ENCODE measurements at regions of chr17 and their contacts with region 1.

Region 1: GRCh38 chr17:42508426-42509165 is 27.4 kb upstream of the NAGLU start:
- DNase-seq: no peak
- ATAC-seq: peak in 1 of 4 donors; percentile 35
- H3K4me3 ChIP-seq: no peak overlapping the region
- H3K27ac ChIP-seq: no peak overlapping the region
- H3K4me1 ChIP-seq: peaks cover 0 to 19% (median 7%) of the 10 kb centered on the region in 12 donors
- H3K27me3 ChIP-seq: no peaks in the 10 kb centered on the region
- CTCF ChIP-seq: no peak
- POLR2A ChIP-seq: no peak

Region 2: DNA sequence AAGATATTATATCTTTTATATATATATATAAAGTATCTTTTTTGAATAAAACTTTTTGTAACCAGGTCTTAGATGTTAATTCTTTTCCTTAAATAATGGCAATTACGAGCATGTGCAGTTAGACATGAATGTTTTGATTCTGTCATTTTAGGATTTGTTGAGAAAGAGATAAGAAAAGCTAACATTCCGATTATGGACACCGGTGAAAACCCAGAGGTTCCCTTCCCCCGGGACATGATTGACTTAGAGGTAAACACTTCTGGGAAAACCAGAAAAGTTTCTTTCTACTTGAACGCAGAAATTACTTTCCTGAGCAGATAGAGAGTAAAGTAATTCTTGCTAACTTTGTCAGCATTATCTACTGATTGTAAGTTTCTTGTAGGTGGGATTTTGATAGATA is 40.7 kb before region 1 on chr17:
- intact Hi-C with region 1: loop called in 3 of 10 experiments (anchors 5 to 10 kb)
- DNase-seq: no peak
- ATAC-seq: no peak
- H3K4me3 ChIP-seq: no peak overlapping the region
- H3K27ac ChIP-seq: no peak overlapping the region
- H3K4me1 ChIP-seq: peaks cover 0 to 17% (median 0%) of the 10 kb centered on the region in 12 donors
- H3K27me3 ChIP-seq: no peaks in the 10 kb centered on the region
- CTCF ChIP-seq: no peak
- POLR2A ChIP-seq: no peak

Region 3: GRCh38 chr17:42494673-42495072 is 13.9 kb before region 1 on chr17:
- intact Hi-C with region 1: loop called in 1 of 10 experiments (anchors 2 kb)
- DNase-seq: no peak
- ATAC-seq: no peak
- H3K4me3 ChIP-seq: no peak overlapping the region
- H3K27ac ChIP-seq: no peak overlapping the region
- H3K4me1 ChIP-seq: peaks cover 0 to 9% (median 0%) of the 10 kb centered on the region in 12 donors
- H3K27me3 ChIP-seq: no peaks in the 10 kb centered on the region
- CTCF ChIP-seq: no peak
- POLR2A ChIP-seq: no peak

Measured in heart left ventricle (tissue), 16 donors.